Posterior vena cava (tissue), 2 donors: ENCODE measurements at regions of chr3 and their contacts with region 1.

Region 1: GRCh38 chr3:137062250-137062649 is 104.5 kb downstream of the IL20RB start:
- DNase-seq: no peak

Region 2: GRCh38 chr3:137084586-137084985 is 22.3 kb after region 1 on chr3:
- intact Hi-C with region 1: loop called in 1 of 2 experiments (anchors 1 kb)
- DNase-seq: no peak

Region 3: DNA sequence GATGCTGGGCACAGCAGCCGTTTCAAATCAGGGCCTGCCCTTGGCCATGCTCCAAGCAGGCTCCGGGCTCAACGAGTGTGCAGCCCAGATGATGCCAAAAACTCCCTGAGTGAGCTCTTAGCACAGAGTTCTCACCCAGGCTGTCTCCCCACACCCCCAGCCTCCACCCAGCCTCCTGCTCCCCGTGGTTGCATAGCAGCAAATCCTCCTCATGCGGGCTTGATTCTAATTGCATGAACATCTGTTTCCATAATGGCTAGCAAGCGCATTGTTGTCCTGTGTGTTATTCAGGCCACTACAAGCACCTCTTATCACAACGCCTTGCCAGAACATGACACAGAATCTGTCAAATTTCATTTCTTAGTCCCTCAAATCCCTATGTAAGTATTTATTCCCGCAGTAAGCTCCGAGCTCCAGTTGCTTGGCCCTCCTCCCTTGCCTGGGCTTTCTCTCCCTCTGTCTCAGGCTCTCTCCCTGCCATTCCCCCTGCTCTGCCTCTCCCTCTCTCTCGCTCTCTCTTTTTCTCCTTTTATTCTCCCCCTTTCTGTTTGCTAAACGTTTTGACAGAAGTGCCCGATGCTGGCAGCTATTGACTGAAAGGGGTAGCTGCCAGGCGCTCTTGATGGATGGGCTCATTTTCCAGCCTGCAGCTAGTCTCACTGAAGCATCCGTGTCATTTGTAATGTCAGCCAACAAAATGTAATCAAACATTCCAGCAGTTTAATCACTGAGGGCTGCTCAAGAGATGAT is 202.0 kb after region 1 on chr3:
- intact Hi-C with region 1: no loop called
- DNase-seq: no peak